ENCODE measurements at regions of chr5 and their contacts with region 1.

Region 1: DNA sequence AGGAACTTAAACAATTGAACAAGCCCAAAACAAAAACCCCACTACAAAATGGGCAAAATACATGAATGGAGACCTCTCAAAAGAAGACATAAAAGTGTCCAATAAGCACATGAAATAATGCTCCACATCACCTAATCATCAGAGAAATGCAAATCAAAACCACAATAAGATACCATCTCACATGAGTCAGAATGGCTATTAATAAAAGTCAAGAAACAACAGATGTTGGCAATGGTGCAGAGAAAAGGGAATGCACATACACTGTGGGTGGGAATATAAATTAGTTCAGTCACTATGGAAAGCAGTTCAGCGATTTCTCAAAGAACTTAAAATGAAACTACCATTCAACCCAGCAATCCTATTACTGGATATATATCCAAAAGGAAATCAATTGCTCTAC is 337.4 kb upstream of the GRIA1 start:
- DNase-seq: no peak
- ATAC-seq: no peak
- H3K4me3 ChIP-seq: no peak overlapping the region
- H3K27ac ChIP-seq: no peak overlapping the region
- H3K4me1 ChIP-seq: no peaks in the 10 kb centered on the region
- H3K27me3 ChIP-seq: peaks cover 0 to 5% (median 0%) of the 10 kb centered on the region in 9 donors
- CTCF ChIP-seq: no peak
- POLR2A ChIP-seq: no peak

Region 2: GRCh38 chr5:152560512-152561137 is 592.5 kb before region 1 on chr5:
- intact Hi-C with region 1: loop called (anchors 1 to 5 kb)
- DNase-seq: peak; percentile 50 to 71 (median 64)
- ATAC-seq: peak in 3 of 4 donors; percentile 62 to 72 (median 64)
- H3K4me3 ChIP-seq: no peak overlapping the region
- H3K27ac ChIP-seq: no peak overlapping the region
- H3K4me1 ChIP-seq: no peaks in the 10 kb centered on the region
- H3K27me3 ChIP-seq: no peaks in the 10 kb centered on the region
- CTCF ChIP-seq: peak; percentile 65 to 92 (median 82)
- POLR2A ChIP-seq: no peak